ENCODE measurements at regions of chr11 and their contacts with region 1.

Region 1: GRCh38 chr11:122796128-122796717 is 42.1 kb upstream of the CRTAM start:
- DNase-seq: peak; percentile 84
- H3K4me3 Mint-ChIP-seq: no peak overlapping the region
- H3K27ac Mint-ChIP-seq: no peak overlapping the region
- H3K4me1 Mint-ChIP-seq: peaks cover 2% of the 10 kb centered on the region
- H3K27me3 Mint-ChIP-seq: no peaks in the 10 kb centered on the region

Region 2: DNA sequence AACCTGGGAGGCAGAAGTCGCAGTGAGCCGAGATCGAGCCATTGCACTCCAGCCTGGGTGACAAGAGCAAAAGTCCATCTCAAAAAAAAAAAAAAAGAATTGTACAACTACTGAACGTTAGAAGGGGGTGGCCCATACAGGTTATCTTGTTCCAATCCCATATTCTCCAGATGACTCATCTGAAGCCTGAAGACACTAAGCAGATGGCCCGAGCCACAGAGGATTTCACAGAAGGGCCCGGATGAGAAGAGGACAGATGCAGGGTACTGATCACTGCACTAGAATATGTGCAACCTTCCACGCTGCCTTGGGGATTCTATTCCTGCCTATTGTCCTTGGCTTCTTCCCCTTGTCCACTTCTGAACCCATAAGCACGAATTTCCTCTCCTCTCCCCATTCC is 211.6 kb before region 1 on chr11:
- CTCF ChIA-PET with region 1: interaction called, 14 read pairs
- intact Hi-C with region 1: loop called (anchors 5 kb)
- DNase-seq: no peak
- H3K4me3 Mint-ChIP-seq: no peak overlapping the region
- H3K27ac Mint-ChIP-seq: no peak overlapping the region
- H3K4me1 Mint-ChIP-seq: peaks cover 7% of the 10 kb centered on the region
- H3K27me3 Mint-ChIP-seq: peaks cover under 1% of the 10 kb centered on the region

Region 3: DNA sequence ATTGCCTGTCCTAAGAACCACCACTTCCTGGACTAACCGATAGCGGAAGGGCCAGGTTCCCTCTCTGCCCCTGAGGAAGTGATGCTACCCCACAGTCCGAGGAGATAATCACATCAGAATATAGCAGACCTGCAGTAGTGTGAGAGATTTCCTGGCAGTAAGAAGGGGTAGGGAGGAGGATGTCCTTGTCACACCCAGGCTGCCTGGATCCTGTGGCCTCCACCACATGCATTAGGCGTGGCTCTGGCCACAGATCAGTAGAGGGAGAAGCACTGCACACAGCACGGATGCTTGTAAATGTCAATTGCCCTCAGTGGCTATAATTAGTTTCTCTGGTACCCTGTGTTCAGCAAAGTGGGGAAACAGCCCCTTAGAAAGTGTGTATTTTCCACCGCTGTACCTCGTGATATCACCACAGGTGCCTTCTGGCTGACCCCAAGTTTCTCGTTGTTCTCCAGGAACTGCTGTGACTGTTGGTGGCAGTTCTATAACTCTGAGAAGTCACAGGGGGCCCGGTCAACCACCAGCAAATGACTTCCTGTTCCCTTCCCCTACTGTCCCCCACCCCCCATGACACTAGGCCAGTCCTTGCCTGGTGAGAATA is 78.9 kb before region 1 on chr11:
- CTCF ChIA-PET with region 1: no interaction called
- intact Hi-C with region 1: no loop called
- DNase-seq: peak; percentile 16
- H3K4me3 Mint-ChIP-seq: no peak overlapping the region
- H3K27ac Mint-ChIP-seq: no peak overlapping the region
- H3K4me1 Mint-ChIP-seq: peaks cover 58% of the 10 kb centered on the region
- H3K27me3 Mint-ChIP-seq: no peaks in the 10 kb centered on the region

Region 4: DNA sequence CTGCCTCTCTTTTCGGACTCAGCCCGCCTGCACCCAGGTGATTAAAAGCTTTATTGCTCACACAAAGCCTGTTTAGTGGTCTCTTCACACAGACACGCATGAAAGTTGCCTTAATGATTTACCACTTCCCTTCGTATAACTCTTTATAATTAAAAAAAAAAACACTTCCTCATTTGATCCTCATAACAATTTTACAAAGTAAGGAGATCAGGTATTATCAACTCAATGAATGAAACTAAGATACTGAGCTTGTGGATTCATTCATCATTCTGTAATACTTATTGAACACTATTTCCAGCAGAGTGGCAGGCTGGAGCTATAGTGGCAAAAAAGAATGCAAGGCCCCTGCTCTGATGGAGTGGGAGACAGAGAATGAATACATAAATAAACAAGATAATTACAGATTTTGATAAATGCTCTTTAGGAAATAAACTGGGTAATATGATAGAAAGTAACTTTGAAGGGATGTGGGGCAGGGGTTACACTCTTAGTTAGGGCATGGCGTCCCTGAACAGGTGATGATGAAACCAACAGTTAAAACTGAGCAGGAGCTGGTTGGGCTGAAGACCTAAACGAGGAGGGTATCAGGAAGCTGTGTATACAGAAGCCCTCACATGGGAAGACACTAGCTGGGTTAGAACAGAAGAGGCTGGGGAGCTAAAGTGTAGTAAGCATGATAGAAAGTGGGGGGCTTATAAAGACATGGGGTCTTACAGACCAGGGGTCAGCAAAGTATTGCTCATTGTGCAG is 36.7 kb after region 1 on chr11:
- CTCF ChIA-PET with region 1: interaction called, 12 read pairs
- intact Hi-C with region 1: no loop called
- DNase-seq: no peak
- H3K4me3 Mint-ChIP-seq: no peak overlapping the region
- H3K27ac Mint-ChIP-seq: no peak overlapping the region
- H3K4me1 Mint-ChIP-seq: peaks cover 9% of the 10 kb centered on the region
- H3K27me3 Mint-ChIP-seq: no peaks in the 10 kb centered on the region

Region 5: GRCh38 chr11:122863704-122864326 is 67.6 kb after region 1 on chr11:
- CTCF ChIA-PET with region 1: interaction called, 289 read pairs
- intact Hi-C with region 1: no loop called
- DNase-seq: peak; percentile 73
- H3K4me3 Mint-ChIP-seq: no peak overlapping the region
- H3K27ac Mint-ChIP-seq: no peak overlapping the region
- H3K4me1 Mint-ChIP-seq: no peaks in the 10 kb centered on the region
- H3K27me3 Mint-ChIP-seq: no peaks in the 10 kb centered on the region

Measured in activated naive CD4-positive, alpha-beta T cell treated with anti-CD3 and anti-CD28 coated beads for 36 hours (primary cell).